Activated T-helper 1 cell treated with anti-CD3 and anti-CD28 coated beads, Interleukin-12 subunit alpha, Interleukin-12 subunit beta, Interleukin-2, Interleukin-4 antibody, amounts not matched to agents 30 ng/mL and 10 ng/mL and 1 ng/mL, durations not matched to agents 14 hours and 24 hours and 36 hours (primary cell): ENCODE measurements at regions of chr11 and their contacts with region 1.

Region 1: GRCh38 chr11:128733440-128734102 is 39.7 kb downstream of the FLI1 start:
- DNase-seq: no peak
- H3K4me3 Mint-ChIP-seq: peak overlapping the region; percentile 65
- H3K27ac Mint-ChIP-seq: peak overlapping the region; percentile 71
- H3K4me1 Mint-ChIP-seq: peaks cover 97% of the 10 kb centered on the region
- H3K27me3 Mint-ChIP-seq: no peaks in the 10 kb centered on the region

Region 2: GRCh38 chr11:128689586-128689945 is 44.0 kb before region 1 on chr11:
- intact Hi-C with region 1: no loop called
- DNase-seq: no peak
- H3K4me3 Mint-ChIP-seq: no peak overlapping the region
- H3K27ac Mint-ChIP-seq: no peak overlapping the region
- H3K4me1 Mint-ChIP-seq: peaks cover 61% of the 10 kb centered on the region
- H3K27me3 Mint-ChIP-seq: peaks cover 61% of the 10 kb centered on the region

Region 3: GRCh38 chr11:128747728-128748148 is 14.2 kb after region 1 on chr11:
- intact Hi-C with region 1: loop called (anchors 1 kb)
- DNase-seq: no peak
- H3K4me3 Mint-ChIP-seq: peak overlapping the region; percentile 63
- H3K27ac Mint-ChIP-seq: peak overlapping the region; percentile 74
- H3K4me1 Mint-ChIP-seq: peaks cover 73% of the 10 kb centered on the region
- H3K27me3 Mint-ChIP-seq: no peaks in the 10 kb centered on the region

Region 4: GRCh38 chr11:128776424-128777284 is 43.1 kb after region 1 on chr11:
- intact Hi-C with region 1: loop called (anchors 5 kb)
- DNase-seq: no peak
- H3K4me3 Mint-ChIP-seq: no peak overlapping the region
- H3K27ac Mint-ChIP-seq: peak overlapping the region; percentile 45
- H3K4me1 Mint-ChIP-seq: peaks cover 40% of the 10 kb centered on the region
- H3K27me3 Mint-ChIP-seq: no peaks in the 10 kb centered on the region